ENCODE measurements at regions of chr10 and their contacts with region 1.

Region 1: DNA sequence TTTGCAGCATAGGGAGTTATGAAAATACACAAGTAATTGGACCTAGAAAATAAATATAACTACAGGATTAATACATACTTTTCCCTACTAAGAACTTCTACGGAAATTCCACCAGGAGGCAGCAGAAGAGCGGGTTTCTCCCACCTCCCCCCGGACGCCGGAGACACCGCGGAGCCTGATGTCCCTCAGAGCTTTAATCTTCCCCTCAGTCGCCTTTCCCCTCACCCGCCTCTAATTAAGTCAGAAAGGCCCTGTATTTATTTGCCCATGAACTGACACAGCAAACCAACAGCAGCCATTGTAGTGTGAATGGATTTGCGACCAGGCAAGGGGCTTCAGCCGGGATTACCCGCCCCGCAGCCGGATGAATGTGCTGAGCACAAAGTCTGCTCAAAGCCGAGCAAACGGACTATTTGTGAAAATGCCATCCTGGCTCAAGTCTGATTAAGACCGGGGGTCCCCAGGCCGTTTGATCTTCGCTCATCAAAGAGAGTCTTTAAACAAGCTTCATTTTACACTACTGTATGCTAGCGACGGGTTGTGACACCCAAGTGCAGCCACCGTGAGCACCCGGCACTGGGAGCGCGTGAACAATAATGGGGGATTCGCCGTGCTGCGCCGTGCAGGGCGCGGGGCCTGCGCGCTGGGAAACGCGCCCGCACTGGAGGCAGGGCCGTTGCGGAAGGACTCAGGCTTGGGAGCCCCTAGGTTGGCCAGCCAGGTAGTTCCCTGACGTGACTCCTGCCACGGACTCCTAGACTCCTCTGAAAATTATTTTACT is 5.6 kb upstream of the DKK1 start:
- DNase-seq: peak; percentile 23 to 26
- ATAC-seq: peak; percentile 56 to 88 (median 77)
- H3K4me3 ChIP-seq: peak overlapping the region; percentile 13
- H3K4me3 Mint-ChIP-seq: peak overlapping the region; percentile 65
- H3K27ac ChIP-seq: no peak overlapping the region
- H3K27ac Mint-ChIP-seq: no peak overlapping the region
- H3K4me1 ChIP-seq: peaks cover 11% of the 10 kb centered on the region
- H3K4me1 Mint-ChIP-seq: peaks cover 5 to 18% of the 10 kb centered on the region in 2 donors
- H3K27me3 ChIP-seq: peaks cover 23% of the 10 kb centered on the region
- H3K27me3 Mint-ChIP-seq: peaks cover 29 to 39% of the 10 kb centered on the region in 2 donors
- CTCF ChIP-seq: peak; percentile 66

Region 2: GRCh38 chr10:52376694-52377354 is 68.4 kb after region 1 on chr10:
- intact Hi-C with region 1: no loop called
- DNase-seq: no peak
- ATAC-seq: no peak
- H3K4me3 ChIP-seq: no peak overlapping the region
- H3K4me3 Mint-ChIP-seq: no peak overlapping the region
- H3K27ac ChIP-seq: no peak overlapping the region
- H3K27ac Mint-ChIP-seq: no peak overlapping the region
- H3K4me1 ChIP-seq: no peaks in the 10 kb centered on the region
- H3K4me1 Mint-ChIP-seq: no peaks in the 10 kb centered on the region
- H3K27me3 ChIP-seq: no peaks in the 10 kb centered on the region
- H3K27me3 Mint-ChIP-seq: peaks cover 0 to 19% of the 10 kb centered on the region in 2 donors
- CTCF ChIP-seq: no peak

Region 3: DNA sequence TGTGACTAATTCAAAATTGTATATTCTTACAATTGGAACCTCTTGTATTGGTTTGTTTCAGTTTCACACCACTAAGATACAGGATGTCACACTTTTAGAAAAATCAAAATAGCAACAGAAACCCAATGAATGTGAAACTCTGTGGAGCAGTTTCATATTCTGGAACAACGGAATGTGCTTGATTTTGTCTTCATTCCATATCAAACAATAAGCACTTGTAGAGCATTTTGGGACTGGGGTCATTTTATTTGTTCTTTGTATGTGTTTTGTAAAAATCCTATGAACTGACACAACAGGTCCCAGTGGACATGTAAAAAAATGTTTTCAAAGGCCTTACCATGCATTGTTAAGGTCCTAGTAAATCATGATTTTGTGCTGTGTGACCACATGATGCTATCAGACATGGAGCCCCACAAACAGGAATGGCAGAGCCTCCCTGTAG is 128.8 kb after region 1 on chr10:
- intact Hi-C with region 1: no loop called
- DNase-seq: no peak
- ATAC-seq: peak; percentile 87 to 93 (median 90)
- H3K4me3 ChIP-seq: no peak overlapping the region
- H3K4me3 Mint-ChIP-seq: peak overlapping the region; percentile 72
- H3K27ac ChIP-seq: peak overlapping the region; percentile 39
- H3K27ac Mint-ChIP-seq: peak overlapping the region; percentile 81 to 85
- H3K4me1 ChIP-seq: peaks cover 8% of the 10 kb centered on the region
- H3K4me1 Mint-ChIP-seq: peaks cover 9 to 15% of the 10 kb centered on the region in 2 donors
- H3K27me3 ChIP-seq: no peaks in the 10 kb centered on the region
- H3K27me3 Mint-ChIP-seq: no peaks in the 10 kb centered on the region
- CTCF ChIP-seq: no peak

Region 4: DNA sequence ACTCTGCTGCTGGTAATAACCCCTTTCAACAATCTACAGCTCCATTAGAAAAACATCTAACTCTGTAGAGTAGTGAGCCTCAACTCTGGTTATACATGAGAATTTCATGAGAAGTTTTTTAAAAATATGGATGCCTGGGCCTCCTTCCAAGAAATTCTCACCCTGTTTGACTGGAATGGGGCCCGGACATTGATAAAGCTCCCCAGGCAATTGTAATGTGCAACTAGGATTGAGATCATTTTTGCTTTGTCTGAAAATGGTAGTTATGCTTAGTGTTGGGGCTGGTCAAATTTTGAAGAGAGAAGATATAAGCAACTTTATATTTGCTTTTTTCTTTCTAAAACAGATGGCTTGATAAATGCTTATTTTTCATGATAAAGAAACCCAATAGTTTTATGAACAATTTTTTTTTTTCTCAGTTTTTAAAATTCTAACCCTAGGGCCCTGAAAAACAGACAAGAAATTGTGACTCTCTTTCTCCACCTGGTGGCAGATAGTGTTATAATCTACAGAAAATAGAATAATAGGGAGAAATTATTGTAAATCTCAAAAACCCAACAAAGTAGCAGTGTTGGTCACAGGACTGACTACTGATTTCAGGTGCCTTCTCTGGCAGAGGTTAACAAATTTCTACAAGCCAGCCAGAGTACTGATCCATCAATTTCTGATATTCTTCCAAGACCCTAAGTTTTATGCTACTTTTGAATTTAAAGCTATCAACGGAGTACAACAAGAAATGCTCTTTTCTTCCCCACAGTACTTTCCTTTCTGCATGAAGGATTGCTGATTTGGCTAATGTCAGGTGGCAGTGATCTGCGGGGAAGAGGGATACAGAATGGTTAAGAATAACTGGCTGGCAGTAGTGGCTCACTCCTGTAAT is 180.4 kb after region 1 on chr10:
- intact Hi-C with region 1: loop called (anchors 1 kb)
- DNase-seq: no peak
- ATAC-seq: no peak
- H3K4me3 ChIP-seq: no peak overlapping the region
- H3K4me3 Mint-ChIP-seq: no peak overlapping the region
- H3K27ac ChIP-seq: no peak overlapping the region
- H3K27ac Mint-ChIP-seq: no peak overlapping the region
- H3K4me1 ChIP-seq: no peaks in the 10 kb centered on the region
- H3K4me1 Mint-ChIP-seq: no peaks in the 10 kb centered on the region
- H3K27me3 ChIP-seq: no peaks in the 10 kb centered on the region
- H3K27me3 Mint-ChIP-seq: no peaks in the 10 kb centered on the region
- CTCF ChIP-seq: peak; percentile 54